Endothelial cell of umbilical vein (primary cell): ENCODE measurements at regions of chr10 and their contacts with region 1.

Region 1: DNA sequence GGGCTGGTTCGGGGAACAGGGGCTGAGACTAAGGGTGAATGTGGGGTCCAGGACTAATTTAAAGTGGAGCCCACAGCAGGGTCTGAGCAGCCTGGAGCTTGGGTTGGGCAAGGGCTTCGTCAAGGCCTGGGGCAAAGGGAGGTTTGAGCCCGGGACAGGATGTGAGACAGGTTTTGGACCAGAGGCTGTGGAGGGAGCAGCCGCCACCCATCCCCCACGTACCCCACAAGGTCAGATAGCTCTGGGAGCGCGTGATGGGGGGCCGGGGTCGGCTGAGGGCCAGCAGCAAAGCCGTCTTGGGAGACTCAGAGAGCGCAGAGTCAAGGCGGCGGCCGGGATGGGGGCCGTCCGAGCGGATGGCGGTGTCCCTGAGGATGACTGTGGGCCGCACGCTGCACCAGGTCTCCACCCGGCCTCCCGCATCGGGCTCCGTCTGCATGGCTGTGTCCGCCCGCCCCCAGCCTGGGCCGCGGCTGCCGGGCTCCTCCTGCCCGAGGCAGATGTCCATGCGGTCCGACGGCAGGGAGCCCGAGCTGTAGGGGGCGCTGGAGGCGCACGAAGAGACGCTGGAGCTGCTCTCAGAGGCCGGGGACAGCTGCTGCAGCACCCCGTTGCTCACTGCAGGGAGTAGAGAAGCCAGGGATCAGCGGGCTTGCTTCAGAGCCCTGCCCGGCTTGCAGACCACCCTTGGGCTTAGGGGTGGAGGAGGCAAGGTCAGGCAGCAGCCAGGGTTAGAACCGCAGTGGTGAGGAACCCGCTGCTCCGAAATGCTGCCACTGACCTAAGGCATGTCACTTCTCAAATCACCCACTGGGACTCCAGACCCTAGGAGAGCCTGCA is 12.1 kb downstream of the PDZD7 start:
- DNase-seq: peak; percentile 82
- H3K4me3 ChIP-seq: no peak overlapping the region
- H3K27ac ChIP-seq: no peak overlapping the region
- H3K4me1 ChIP-seq: no peaks in the 10 kb centered on the region
- H3K27me3 ChIP-seq: no peaks in the 10 kb centered on the region
- CTCF ChIP-seq: peak; percentile 90 to 93
- POLR2A ChIP-seq: no peak

Region 2: GRCh38 chr10:100998991-100999741 is 19.7 kb before region 1 on chr10:
- CTCF ChIA-PET with region 1: interaction called, 254 read pairs
- POLR2A ChIA-PET with region 1: interaction called, 3 read pairs
- dilution Hi-C with region 1: no loop called
- intact Hi-C with region 1: no loop called
- DNase-seq: peak; percentile 75
- H3K4me3 ChIP-seq: peak overlapping the region; percentile 6 to 85 (median 29)
- H3K27ac ChIP-seq: peak overlapping the region; percentile 86
- H3K4me1 ChIP-seq: peaks cover 33% of the 10 kb centered on the region
- H3K27me3 ChIP-seq: no peaks in the 10 kb centered on the region
- CTCF ChIP-seq: peak; percentile 92 to 95
- POLR2A ChIP-seq: peak; percentile 76

Region 3: DNA sequence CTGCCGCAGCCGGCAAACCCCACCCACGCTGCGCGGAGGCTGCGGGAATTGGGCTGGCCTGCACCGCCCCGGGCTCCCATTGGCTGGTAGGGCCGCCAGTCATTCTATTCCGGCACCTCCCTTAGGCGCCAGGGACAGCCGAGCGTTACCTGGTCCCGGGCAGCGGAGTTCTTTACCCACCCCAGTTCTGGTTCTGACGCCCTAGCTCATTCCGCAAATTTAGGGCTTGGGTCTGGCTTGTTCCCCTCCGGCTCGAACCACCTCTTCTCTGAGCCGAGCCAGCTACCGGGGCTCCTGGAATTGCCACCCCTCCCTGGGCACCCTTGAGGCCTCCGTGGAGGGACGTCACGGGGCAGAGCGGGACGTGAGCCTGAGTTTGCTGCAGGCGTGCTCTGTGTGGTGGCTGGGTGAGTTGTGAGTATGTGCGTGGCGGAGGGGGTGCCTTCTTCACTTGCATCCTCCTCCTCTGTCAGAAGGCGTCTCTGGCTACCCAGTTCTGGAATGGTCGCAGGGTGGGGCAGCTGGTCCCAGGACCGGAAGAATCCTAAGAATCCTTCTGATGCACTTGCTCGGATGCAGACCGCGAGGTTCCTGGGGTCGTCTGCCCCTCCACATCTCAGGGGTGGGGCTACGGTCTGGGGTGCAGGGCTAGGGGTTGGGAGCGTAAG is 12.4 kb after region 1 on chr10 and contains the starts of genes PDZD7 and SFXN3:
- CTCF ChIA-PET with region 1: interaction called, 74 read pairs
- POLR2A ChIA-PET with region 1: no interaction called
- dilution Hi-C with region 1: no loop called
- intact Hi-C with region 1: loop called (anchors 2 kb)
- DNase-seq: peak; percentile 88
- H3K4me3 ChIP-seq: peak within 1 kb of the TSS; percentile 48 to 77 (median 71)
- H3K27ac ChIP-seq: peak within 1 kb of the TSS; percentile 91
- H3K4me1 ChIP-seq: peaks cover 16% of the 10 kb centered on the region
- H3K27me3 ChIP-seq: peaks cover 0 to 9% of the 10 kb centered on the region in 2 experiments
- CTCF ChIP-seq: no peak
- POLR2A ChIP-seq: no peak
- total RNA-seq, gene PDZD7: 0.55 and 1.6 TPM in 2 replicates
- total RNA-seq, gene SFXN3: 79.6 and 83.1 TPM in 2 replicates

Region 4: GRCh38 chr10:101042667-101043355 is 24.0 kb after region 1 on chr10:
- CTCF ChIA-PET with region 1: interaction called, 56 read pairs
- POLR2A ChIA-PET with region 1: no interaction called
- dilution Hi-C with region 1: no loop called
- intact Hi-C with region 1: no loop called
- DNase-seq: peak; percentile 97
- H3K4me3 ChIP-seq: peak overlapping the region; percentile 12 to 50 (median 38)
- H3K27ac ChIP-seq: peak overlapping the region; percentile 71
- H3K4me1 ChIP-seq: peaks cover 11% of the 10 kb centered on the region
- H3K27me3 ChIP-seq: peaks cover 17% of the 10 kb centered on the region in 2 experiments
- CTCF ChIP-seq: no peak
- POLR2A ChIP-seq: peak; percentile 64

Region 5: GRCh38 chr10:101050208-101051069 is 31.6 kb after region 1 on chr10:
- CTCF ChIA-PET with region 1: interaction called, 19 read pairs
- POLR2A ChIA-PET with region 1: no interaction called
- dilution Hi-C with region 1: no loop called
- intact Hi-C with region 1: no loop called
- DNase-seq: peak; percentile 49
- H3K4me3 ChIP-seq: no peak overlapping the region
- H3K27ac ChIP-seq: no peak overlapping the region
- H3K4me1 ChIP-seq: no peaks in the 10 kb centered on the region
- H3K27me3 ChIP-seq: peaks cover 36 to 38% of the 10 kb centered on the region in 2 experiments
- CTCF ChIP-seq: peak; percentile 87 to 97
- POLR2A ChIP-seq: no peak

Region 6: GRCh38 chr10:101060036-101060950 is 41.5 kb after region 1 on chr10:
- CTCF ChIA-PET with region 1: interaction called, 17 read pairs
- POLR2A ChIA-PET with region 1: no interaction called
- dilution Hi-C with region 1: no loop called
- intact Hi-C with region 1: no loop called
- DNase-seq: peak; percentile 94
- H3K4me3 ChIP-seq: peak overlapping the region; percentile 89 to 97 (median 96)
- H3K27ac ChIP-seq: peak overlapping the region; percentile 99
- H3K4me1 ChIP-seq: peaks cover 36% of the 10 kb centered on the region
- H3K27me3 ChIP-seq: no peaks in the 10 kb centered on the region
- CTCF ChIP-seq: peak; percentile 89
- POLR2A ChIP-seq: peak; percentile 8

Region 7: GRCh38 chr10:101067356-101068083 is 48.7 kb after region 1 on chr10:
- CTCF ChIA-PET with region 1: interaction called, 58 read pairs
- POLR2A ChIA-PET with region 1: no interaction called
- dilution Hi-C with region 1: no loop called
- intact Hi-C with region 1: loop called (anchors 1 kb)
- DNase-seq: peak; percentile 85
- H3K4me3 ChIP-seq: peak overlapping the region; percentile 47 to 60 (median 54)
- H3K27ac ChIP-seq: no peak overlapping the region
- H3K4me1 ChIP-seq: peaks cover 27% of the 10 kb centered on the region
- H3K27me3 ChIP-seq: peaks cover 0 to 1% of the 10 kb centered on the region in 2 experiments
- CTCF ChIP-seq: peak; percentile 78 to 80
- POLR2A ChIP-seq: no peak